ENCODE measurements at regions of chr16 and their contacts with region 1.

Region 1: GRCh38 chr16:30609926-30610839 is at the start of gene ZNF689:
- DNase-seq: peak; percentile 97
- H3K4me3 ChIP-seq: peak within 1 kb of the TSS; percentile 83
- H3K27ac ChIP-seq: peak within 1 kb of the TSS; percentile 77
- H3K4me1 ChIP-seq: no peaks in the 10 kb centered on the region
- H3K27me3 ChIP-seq: no peaks in the 10 kb centered on the region
- total RNA-seq, gene ZNF689: 5.7 TPM in 2 replicates

Region 2: GRCh38 chr16:30142672-30143346 is 467.4 kb before region 1 on chr16:
- in situ Hi-C with region 1: loop called (anchors 25 kb)
- DNase-seq: peak; percentile 5
- H3K4me3 ChIP-seq: no peak overlapping the region
- H3K27ac ChIP-seq: no peak overlapping the region
- H3K4me1 ChIP-seq: no peaks in the 10 kb centered on the region
- H3K27me3 ChIP-seq: no peaks in the 10 kb centered on the region

Region 3: DNA sequence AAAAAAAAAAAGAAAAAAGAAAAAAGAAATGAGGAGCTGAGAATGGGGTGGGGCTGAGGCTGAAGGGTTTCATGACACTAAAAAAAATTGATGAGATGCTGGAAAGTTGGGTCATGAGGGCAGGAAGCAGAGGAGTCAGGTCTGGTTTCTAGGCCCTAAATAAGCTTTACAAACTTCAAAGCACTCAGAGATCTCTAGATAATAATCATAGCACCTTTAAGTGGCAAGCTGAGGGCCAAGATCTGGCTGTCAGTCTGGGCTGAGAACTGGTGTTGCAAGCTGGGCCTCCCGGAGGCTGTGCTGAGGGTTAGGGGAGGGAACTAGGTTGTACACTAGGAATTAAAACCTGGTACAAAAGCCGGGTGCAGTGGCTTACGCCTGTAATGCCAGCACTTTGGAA is 58.4 kb before region 1 on chr16:
- in situ Hi-C with region 1: no loop called
- DNase-seq: no peak
- H3K4me3 ChIP-seq: no peak overlapping the region
- H3K27ac ChIP-seq: no peak overlapping the region
- H3K4me1 ChIP-seq: no peaks in the 10 kb centered on the region
- H3K27me3 ChIP-seq: no peaks in the 10 kb centered on the region

Measured in GM23248 (cell line).